MCF 10A (cell line): ENCODE measurements at regions of chr1 and their contacts with region 1.

Region 1: DNA sequence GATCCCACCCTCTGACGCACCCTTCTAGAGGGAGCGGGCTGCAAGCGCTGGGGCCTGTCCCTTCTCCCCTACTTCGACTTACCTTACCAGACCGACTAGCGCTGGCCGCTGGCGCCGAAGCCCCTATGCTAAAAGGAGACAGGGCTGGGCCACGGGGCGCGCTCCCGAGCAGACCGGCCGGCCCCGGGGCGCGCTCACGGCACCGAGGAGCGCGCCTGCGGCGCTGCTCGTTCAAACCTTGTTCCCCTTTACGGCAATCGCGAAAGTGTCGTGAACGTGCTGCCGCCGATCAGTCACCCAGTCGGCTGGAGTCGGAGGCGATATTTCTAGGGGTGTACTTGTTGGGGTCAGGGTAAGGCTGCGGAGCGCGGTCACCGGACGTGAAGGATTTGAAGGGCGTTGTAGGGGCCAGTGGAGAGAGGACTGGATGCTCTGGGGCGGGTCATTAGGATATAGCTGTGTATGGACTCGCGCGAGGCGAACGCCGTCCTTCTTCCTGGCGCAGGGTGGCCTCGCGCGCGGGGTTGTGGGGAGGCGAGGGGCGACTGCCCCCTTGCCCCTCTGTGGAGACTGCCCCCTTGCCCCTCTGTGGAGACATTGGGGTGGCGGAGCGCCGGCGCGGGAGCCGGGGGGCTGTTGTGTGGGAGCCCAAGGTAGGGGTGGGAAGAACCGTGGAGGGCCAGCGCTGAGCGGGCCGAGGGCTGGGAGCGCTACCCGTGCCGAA is at the starts of genes CEPT1 and DRAM2:
- DNase-seq: peak; percentile 94
- H3K4me3 Mint-ChIP-seq: peak within 1 kb of the TSS; percentile 94
- H3K27ac Mint-ChIP-seq: peak within 1 kb of the TSS; percentile 97
- H3K4me1 Mint-ChIP-seq: peaks cover 28% of the 10 kb centered on the region
- H3K27me3 Mint-ChIP-seq: no peaks in the 10 kb centered on the region
- CTCF ChIP-seq: no peak
- total RNA-seq, gene CEPT1: 43.1 and 45.0 TPM in 2 replicates
- total RNA-seq, gene DRAM2: 30.5 and 32.1 TPM in 2 replicates

Region 2: DNA sequence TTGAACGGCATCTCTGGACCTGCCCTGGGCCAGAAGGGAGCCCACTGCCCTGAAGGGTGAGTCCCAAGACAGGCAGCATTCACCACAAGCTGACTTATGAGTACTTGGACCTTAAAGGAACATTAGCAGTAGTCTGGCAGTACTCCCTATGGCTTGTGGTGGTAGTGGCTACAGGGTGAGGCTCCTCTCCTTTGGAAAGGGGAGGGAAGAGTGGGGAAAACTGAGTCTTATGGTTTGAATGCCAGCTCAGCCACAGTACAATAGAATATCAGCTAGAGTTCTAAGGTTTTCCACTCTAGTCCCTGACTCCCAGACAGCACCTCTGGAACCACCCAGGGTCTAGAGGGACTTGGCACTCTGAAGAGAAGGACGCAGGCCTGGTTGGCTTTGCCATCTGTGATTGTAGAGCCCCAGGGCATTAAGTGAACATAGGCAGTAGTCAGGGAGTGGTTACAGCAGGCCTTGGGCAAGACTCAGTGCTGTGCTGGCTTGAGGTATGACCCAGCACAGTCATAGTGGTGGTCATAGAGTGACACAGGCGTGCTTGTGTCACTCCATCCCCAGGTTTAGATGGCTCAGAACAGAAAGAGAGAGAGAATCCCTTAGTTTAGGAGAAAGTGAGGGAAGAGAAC is 236.1 kb before region 1 on chr1:
- CTCF ChIA-PET with region 1: no interaction called
- POLR2A ChIA-PET with region 1: no interaction called
- intact Hi-C with region 1: no loop called
- DNase-seq: no peak
- H3K4me3 Mint-ChIP-seq: no peak overlapping the region
- H3K27ac Mint-ChIP-seq: peak overlapping the region; percentile 78
- H3K4me1 Mint-ChIP-seq: peaks cover 10% of the 10 kb centered on the region
- H3K27me3 Mint-ChIP-seq: no peaks in the 10 kb centered on the region
- CTCF ChIP-seq: no peak

Region 3: DNA sequence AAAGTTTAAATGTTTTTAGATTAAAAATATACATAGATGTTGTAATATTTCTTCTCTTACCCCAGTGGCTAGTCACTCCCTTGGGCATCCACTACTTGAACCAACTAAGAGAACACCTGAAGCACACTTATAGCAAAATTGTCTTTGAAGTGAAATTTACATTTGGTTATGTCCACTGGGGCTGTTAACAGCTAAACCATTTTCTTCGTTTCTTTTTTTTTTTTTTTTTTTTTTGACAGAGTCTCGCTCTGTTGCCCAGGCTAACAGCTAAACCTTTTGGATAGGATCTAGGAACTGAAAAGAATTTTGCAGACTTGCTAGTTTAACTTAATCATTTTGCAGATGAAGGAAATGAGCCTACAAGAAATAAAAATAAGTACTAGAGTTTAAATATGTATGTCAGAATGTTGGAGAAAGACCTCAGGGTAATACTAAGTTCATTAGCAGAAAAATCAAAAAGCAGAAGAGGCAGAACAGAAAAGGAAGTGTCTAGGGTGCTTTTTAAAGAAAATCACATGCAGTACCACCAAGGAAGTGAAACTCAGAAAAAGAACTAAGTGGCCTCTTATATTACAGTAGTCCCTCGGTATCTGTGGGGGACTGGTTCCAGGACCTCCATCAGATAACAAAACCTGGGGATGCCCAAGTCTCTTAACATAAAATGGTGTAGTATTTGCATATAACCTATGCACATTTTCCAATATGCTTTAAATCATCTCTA is 12.0 kb before region 1 on chr1:
- CTCF ChIA-PET with region 1: interaction called, 4 read pairs
- POLR2A ChIA-PET with region 1: interaction called, 20 read pairs
- intact Hi-C with region 1: no loop called
- DNase-seq: no peak
- H3K4me3 Mint-ChIP-seq: no peak overlapping the region
- H3K27ac Mint-ChIP-seq: no peak overlapping the region
- H3K4me1 Mint-ChIP-seq: no peaks in the 10 kb centered on the region
- H3K27me3 Mint-ChIP-seq: no peaks in the 10 kb centered on the region
- CTCF ChIP-seq: no peak

Region 4: DNA sequence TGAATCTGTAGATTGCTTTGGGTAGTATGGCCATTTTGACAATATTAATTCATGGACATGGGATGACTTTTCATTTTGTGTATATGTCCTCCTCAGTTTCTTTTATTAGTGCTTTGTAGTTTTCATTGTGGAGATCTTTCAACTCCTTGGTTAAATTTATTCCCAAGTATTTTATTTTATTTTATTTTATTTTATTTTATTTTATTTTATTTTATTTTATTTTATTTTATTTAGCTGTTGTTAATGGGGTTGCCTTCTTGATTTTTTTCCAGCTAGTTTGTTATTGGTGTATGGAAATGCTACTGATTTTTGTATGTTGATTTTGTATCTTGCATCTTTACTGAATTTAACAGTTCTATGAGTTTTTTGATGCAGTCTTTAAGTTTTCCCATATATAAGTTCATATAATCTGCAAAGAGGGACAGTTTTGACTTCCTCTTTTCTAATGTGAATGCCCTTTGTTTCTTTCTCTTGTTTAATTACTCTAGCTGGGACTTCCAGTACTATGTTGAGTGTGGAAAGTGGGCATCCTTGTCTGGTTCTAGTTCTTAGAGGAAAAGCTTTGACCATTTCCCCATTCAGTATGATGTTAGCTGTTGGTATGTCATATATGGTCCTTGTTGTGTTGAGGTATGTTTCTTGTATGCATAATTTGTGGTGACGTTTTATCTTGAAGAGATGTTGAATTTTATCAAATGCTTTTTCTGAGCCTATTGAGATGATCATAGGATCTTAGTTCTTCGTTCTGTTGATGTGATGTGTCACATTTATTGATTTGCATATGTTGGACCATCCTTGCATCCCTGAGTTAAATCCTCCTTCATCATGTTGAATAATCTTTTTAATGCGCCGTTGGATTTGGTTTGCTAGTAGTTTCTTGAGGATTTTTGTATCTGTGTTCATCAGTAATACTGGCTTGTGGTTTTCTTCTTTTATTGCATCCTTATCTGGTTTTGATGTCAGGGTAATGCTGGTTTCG is 14.2 kb after region 1 on chr1:
- CTCF ChIA-PET with region 1: no interaction called
- POLR2A ChIA-PET with region 1: interaction called, 12 read pairs
- intact Hi-C with region 1: no loop called
- DNase-seq: no peak
- H3K4me3 Mint-ChIP-seq: no peak overlapping the region
- H3K27ac Mint-ChIP-seq: no peak overlapping the region
- H3K4me1 Mint-ChIP-seq: peaks cover 13% of the 10 kb centered on the region
- H3K27me3 Mint-ChIP-seq: no peaks in the 10 kb centered on the region
- CTCF ChIP-seq: no peak